Activated B cell treated with CpG ODN at 0.5 μM for 24 hours (primary cell): ENCODE measurements at regions of chr20 and their contacts with region 1.

Region 1: DNA sequence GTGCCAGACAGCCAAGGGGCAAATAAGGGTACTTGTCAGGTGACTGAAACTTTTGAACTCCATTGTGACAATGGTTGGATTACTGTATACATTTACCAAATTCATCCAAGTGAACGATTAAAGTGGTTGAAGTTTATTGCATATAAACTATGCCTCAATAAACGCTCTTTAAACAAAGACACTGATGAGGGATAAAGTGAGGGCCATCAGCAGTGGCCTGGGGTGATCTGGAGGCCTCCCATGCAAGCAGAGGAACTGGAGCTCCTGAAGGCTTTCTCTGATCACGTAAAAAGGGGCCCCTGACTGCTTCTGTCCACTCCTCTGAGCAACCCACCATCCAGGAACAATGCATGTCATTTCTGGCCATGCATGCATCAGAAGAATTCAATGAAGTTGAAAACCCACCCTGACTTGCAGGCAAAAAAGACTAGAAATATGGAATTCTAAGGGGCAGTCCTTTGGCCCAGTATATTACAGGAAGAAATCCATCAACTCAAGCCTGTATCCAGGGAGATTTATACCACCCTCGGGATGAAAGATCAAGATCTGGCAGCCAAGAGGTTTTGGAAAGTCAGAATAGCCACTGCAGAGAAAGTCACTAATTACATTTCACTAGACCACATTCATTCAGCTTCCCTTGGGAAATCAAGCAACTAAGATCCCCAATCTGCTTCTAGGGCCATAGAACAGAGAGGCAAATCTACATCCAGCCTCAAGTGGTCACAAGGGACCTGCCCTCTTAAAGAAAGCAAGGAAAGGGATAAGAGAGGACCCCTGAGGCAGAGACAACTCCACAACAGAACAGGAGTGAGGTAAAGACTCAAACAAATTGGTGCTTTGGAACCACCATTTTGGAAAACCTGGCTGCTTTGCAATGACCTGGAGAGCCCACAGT is 31.7 kb upstream of the RAB22A start:
- DNase-seq: no peak
- ATAC-seq: no peak
- H3K4me3 Mint-ChIP-seq: no peak overlapping the region
- H3K27ac Mint-ChIP-seq: no peak overlapping the region
- H3K4me1 Mint-ChIP-seq: peaks cover 2% of the 10 kb centered on the region
- H3K27me3 Mint-ChIP-seq: no peaks in the 10 kb centered on the region
- CTCF ChIP-seq: no peak

Region 2: DNA sequence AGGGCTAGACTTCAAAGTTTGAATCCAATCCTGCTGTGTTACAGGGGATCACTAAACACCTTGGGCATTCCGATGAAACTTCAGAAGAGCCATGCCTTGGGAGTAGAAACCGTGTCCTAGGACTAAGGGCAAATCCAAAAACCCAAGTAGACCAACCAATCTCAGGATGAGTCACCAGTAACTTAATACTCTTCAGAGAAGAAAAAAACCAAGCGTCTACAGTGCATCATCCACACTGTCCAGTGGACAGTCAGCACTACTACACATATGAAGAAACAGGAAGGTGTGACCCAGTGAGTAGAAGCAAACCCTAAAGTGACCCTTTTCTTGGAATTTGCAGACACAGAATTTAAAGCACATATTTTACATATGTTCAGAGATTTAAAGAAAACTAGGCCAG is 71.8 kb after region 1 on chr20:
- CTCF ChIA-PET with region 1: no interaction called
- POLR2A ChIA-PET with region 1: interaction called, 11 read pairs
- intact Hi-C with region 1: no loop called
- DNase-seq: no peak
- ATAC-seq: no peak
- H3K4me3 Mint-ChIP-seq: no peak overlapping the region
- H3K27ac Mint-ChIP-seq: no peak overlapping the region
- H3K4me1 Mint-ChIP-seq: no peaks in the 10 kb centered on the region
- H3K27me3 Mint-ChIP-seq: no peaks in the 10 kb centered on the region
- CTCF ChIP-seq: no peak